A549 (cell line): ENCODE measurements at regions of chr11 and their contacts with region 1.

Region 1: GRCh38 chr11:1896923-1897322 is 5.2 kb upstream of the PRR33 start:
- DNase-seq: no peak
- ATAC-seq: no peak
- H3K4me3 ChIP-seq: no peak overlapping the region
- H3K27ac ChIP-seq: no peak overlapping the region
- H3K4me1 ChIP-seq: no peaks in the 10 kb centered on the region
- CTCF ChIP-seq: no peak
- EP300 ChIP-seq: no peak
- POLR2A ChIP-seq: no peak
- RAD21 ChIP-seq: no peak

Region 2: DNA sequence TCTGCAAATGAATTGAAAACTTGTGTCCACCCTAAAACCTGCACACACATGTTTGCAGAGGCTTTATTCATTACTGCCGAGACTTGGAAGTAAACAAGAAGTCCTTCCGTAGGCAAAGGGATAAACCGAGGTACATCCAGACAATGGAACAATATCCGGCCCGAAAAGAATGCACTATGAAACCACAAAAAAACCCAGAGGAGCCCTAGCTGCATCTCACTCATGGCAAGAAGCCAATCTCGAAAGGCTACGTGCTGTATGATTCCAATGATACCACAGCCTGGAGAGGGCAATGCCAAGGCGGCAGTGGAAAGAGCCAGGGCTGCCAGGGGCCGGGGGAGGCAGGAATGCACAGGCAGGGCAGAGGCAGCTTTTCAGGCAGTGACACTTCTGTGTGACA is 47.1 kb after region 1 on chr11:
- CTCF ChIA-PET with region 1: interaction called, 33 read pairs
- POLR2A ChIA-PET with region 1: no interaction called
- DNase-seq: no peak
- ATAC-seq: no peak; a peak in 1 of 6 replicates
- H3K4me3 ChIP-seq: no peak overlapping the region
- H3K27ac ChIP-seq: no peak overlapping the region
- H3K4me1 ChIP-seq: no peaks in the 10 kb centered on the region
- CTCF ChIP-seq: no peak
- EP300 ChIP-seq: no peak
- POLR2A ChIP-seq: no peak
- RAD21 ChIP-seq: no peak